Dorsolateral prefrontal cortex (tissue), 120 donors: ENCODE measurements at regions of chr17 and their contacts with region 1.

Region 1: GRCh38 chr17:34980681-34981537 is 597 bp downstream of the LIG3 start:
- DNase-seq: peak in 9 of 10 donors; percentile 41 to 73 (median 61)
- H3K4me3 ChIP-seq: peak overlapping the region; percentile 55 to 100 (median 95)
- H3K27ac ChIP-seq: peak overlapping the region; percentile 77 to 99 (median 94)
- H3K27me3 ChIP-seq: no peaks in the 10 kb centered on the region
- CTCF ChIP-seq: peak in 33 of 56 donors; percentile 13 to 54 (median 33)

Region 2: DNA sequence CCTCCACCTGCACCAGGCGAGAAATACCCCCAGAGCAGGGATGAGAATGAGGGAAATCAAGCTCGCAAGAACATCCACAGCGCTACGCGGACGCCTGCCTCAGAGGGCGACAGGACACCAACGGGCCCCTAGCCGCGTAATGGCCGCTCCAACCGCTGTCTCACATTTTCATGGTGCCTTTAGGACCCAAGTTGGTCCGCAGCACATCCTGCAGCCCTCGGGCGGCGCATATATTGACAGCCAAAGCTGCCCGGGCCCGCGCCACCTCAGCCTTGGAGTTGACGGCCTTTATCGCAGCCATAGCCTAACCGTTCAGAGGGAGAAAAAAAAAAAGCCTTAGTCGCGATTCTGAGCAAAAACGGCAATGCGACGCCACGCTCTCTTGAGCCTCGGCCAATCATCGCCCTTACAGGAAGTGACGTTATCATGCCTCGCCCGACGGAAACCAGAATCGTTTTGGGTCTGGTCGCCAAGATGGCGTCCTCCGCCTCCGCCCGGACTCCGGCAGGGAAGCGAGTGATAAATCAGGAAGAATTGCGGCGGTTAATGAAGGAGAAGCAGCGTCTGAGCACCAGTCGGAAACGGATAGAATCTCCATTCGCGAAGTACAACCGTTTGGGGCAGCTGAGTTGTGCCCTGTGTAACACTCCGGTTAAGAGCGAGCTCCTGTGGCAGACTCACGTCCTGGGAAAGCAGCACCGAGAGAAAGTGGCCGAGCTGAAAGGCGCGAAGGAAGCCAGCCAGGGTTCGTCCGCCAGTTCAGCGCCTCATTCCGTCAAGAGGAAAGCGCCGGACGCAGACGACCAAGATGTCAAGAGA is 19.6 kb before region 1 on chr17 and contains the starts of genes CCT6B and ZNF830:
- intact Hi-C with region 1: loop called (anchors 1 kb)
- DNase-seq: peak; percentile 87 to 95 (median 90)
- H3K4me3 ChIP-seq: peak within 1 kb of the TSS; percentile 66 to 99 (median 91)
- H3K27ac ChIP-seq: peak within 1 kb of the TSS; percentile 70 to 99 (median 96)
- H3K27me3 ChIP-seq: no peaks in the 10 kb centered on the region
- CTCF ChIP-seq: peak in 39 of 56 donors; percentile 4 to 60 (median 29)
- total RNA-seq, gene CCT6B: 1.3 to 9.3 (median 4.1) TPM
- total RNA-seq, gene ZNF830: 9.3 to 22.0 (median 15.2) TPM

Region 3: GRCh38 chr17:35028531-35029262 is 47.8 kb after region 1 on chr17:
- intact Hi-C with region 1: no loop called
- DNase-seq: no peak
- H3K4me3 ChIP-seq: no peak overlapping the region
- H3K27ac ChIP-seq: peak overlapping the region; percentile 25 to 100 (median 88)
- H3K27me3 ChIP-seq: no peaks in the 10 kb centered on the region
- CTCF ChIP-seq: no peak